PC-9 (cell line): ENCODE measurements at regions of chr6 and their contacts with region 1.

Region 1: DNA sequence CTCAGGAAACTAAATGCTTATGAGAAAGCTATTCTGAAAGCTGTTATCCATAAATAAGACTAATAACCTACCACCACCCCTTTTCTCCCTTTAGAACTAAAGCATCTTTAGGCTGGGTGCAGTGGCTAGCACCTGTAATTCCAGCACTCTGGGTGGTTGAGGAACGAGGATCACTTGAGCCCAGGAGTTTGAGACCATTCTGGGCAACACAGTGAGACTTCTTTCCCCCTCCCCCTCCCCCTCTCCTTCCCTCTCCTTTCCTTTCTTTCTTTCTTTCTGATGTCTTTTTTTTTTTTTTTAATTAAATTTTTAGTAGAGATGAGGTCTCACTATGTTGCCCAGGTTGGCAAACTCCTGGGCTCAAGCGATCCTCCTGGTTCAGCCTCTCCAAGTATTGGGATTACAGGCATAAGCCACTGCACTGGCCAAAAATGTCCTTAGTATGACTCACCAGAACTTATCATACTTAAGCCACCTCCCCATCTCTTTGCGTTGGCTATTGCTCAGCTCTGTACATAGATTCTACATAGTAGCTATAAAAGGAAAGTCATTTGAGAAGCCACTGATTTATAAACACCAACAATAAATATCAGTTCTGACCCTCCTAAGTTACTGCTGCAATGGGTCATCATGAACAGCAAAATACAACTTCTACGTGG is 54.8 kb upstream of the SPDEF start:
- DNase-seq: peak in 1 of 2 experiments; percentile 72
- H3K4me3 ChIP-seq: no peak overlapping the region
- H3K27ac ChIP-seq: peak overlapping the region; percentile 72; the same call in 1 of the 2 replicates
- H3K4me1 ChIP-seq: peaks cover 5% of the 10 kb centered on the region; the same call in 1 of the 2 replicates
- H3K27me3 ChIP-seq: no peaks in the 10 kb centered on the region
- CTCF ChIP-seq: no peak

Region 2: DNA sequence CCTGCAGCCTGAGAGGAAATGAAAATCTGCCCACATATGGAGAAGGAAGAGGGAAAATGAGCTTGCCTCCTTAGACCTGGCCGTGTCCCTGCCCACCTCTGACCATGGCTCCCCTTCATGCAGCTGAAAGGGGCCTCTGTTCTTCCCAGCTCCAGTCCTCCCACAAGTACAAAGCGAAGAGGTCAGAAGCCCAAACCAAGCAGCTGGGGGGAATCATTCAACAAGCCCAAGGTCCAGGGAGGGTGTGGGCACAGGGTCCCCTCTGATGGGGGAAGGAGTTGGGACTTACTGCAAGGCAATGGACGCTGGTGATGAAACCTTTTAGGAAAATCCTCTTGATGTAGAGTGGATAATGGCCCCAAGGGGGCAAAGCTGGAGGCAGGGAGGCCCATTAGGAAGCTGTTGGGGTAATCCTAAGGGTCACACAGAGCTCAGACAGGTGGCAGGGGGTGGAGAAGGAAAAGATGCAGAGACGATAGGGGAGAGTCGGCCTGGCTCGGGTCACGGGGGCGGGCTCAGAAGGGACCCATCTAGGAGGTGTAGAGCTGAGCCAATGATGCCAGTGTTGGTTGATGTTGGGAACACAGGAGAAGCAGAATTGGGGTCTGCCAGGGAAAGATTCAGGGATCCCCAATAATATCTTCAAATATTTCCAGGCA is 449.0 kb before region 1 on chr6:
- CTCF ChIA-PET with region 1: interaction called, 17 read pairs
- POLR2A ChIA-PET with region 1: no interaction called
- intact Hi-C with region 1: loop called (anchors 5 kb)
- DNase-seq: no peak
- H3K4me3 ChIP-seq: no peak overlapping the region
- H3K27ac ChIP-seq: no peak overlapping the region
- H3K4me1 ChIP-seq: no peaks in the 10 kb centered on the region; the same call in 1 of the 2 replicates
- H3K27me3 ChIP-seq: no peaks in the 10 kb centered on the region; the same call in 1 of the 2 replicates
- CTCF ChIP-seq: no peak

Region 3: GRCh38 chr6:34414999-34415858 is 195.7 kb before region 1 on chr6:
- CTCF ChIA-PET with region 1: no interaction called
- POLR2A ChIA-PET with region 1: no interaction called
- intact Hi-C with region 1: loop called (anchors 5 kb)
- DNase-seq: peak in 1 of 2 experiments; percentile 60
- H3K4me3 ChIP-seq: no peak overlapping the region
- H3K27ac ChIP-seq: no peak overlapping the region
- H3K4me1 ChIP-seq: no peaks in the 10 kb centered on the region
- H3K27me3 ChIP-seq: no peaks in the 10 kb centered on the region
- CTCF ChIP-seq: peak; percentile 54

Region 4: DNA sequence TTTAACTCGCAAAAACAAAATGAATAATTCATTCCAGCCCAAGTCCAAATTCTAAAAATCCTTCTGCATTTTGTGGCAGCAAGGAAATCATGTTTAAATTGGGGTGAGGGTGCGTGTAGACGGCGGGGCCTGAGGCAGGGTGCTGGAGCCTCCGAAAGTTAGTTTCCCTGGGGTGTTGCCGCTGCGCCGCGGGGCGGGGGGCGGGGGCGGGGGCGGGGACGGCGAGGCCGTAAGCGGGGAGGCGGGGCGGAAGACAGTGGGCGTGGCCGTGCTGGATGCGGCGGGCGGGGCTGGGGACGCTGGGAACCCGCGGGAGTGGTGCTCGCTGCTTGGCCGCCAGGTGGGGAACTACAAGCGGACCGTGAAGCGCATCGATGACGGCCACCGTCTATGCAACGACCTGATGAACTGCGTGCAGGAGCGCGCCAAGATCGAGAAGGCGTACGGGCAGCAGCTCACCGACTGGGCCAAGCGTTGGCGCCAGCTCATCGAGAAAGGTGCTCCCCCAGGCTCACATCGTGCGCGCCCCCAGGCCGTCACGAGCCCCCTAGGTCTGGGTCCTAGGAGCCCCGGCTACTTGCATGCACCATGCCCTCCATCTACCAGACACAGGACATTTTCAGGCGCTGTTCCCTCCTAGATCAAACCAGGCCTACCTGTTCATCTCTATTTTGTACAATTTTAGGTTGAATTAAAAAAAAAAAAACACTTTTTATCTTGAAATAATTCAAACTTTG is 83.8 kb before region 1 on chr6:
- CTCF ChIA-PET with region 1: interaction called, 6 read pairs
- POLR2A ChIA-PET with region 1: no interaction called
- intact Hi-C with region 1: loop called (anchors 1 kb)
- DNase-seq: peak; percentile 75 to 93
- H3K4me3 ChIP-seq: peak overlapping the region; percentile 36; the same call in 1 of the 2 replicates
- H3K27ac ChIP-seq: no peak overlapping the region
- H3K4me1 ChIP-seq: peaks cover 12% of the 10 kb centered on the region
- H3K27me3 ChIP-seq: no peaks in the 10 kb centered on the region
- CTCF ChIP-seq: peak; percentile 56

Region 5: DNA sequence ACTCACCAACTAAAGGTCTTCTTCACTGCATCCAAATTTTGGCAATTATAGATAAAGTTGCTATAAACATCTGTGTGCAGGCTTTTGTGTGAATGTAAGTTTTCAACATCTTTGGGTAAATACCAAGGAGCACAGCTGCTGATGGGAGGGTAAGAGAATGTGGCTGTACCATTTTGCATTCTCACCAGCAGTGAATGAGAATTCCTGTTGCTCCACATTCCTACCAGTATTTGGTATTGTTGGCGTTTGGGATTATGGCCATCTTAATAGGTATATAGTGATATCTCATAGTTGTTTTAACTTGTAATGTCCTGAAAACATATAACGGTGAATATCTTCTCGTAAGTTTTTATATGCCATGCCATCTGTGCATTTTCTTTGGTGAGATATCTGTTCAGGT is 16.3 kb after region 1 on chr6:
- CTCF ChIA-PET with region 1: no interaction called
- POLR2A ChIA-PET with region 1: no interaction called
- intact Hi-C with region 1: no loop called
- DNase-seq: no peak
- H3K4me3 ChIP-seq: no peak overlapping the region
- H3K27ac ChIP-seq: no peak overlapping the region
- H3K4me1 ChIP-seq: peaks cover 9% of the 10 kb centered on the region; the same call in 1 of the 2 replicates
- H3K27me3 ChIP-seq: no peaks in the 10 kb centered on the region
- CTCF ChIP-seq: no peak

Region 6: GRCh38 chr6:34757687-34758274 is 146.8 kb after region 1 on chr6:
- CTCF ChIA-PET with region 1: no interaction called
- POLR2A ChIA-PET with region 1: no interaction called
- intact Hi-C with region 1: loop called (anchors 1 kb)
- DNase-seq: no peak
- H3K4me3 ChIP-seq: peak overlapping the region; percentile 94
- H3K27ac ChIP-seq: peak overlapping the region; percentile 91; the same call in 1 of the 2 replicates
- H3K4me1 ChIP-seq: peaks cover 8% of the 10 kb centered on the region
- H3K27me3 ChIP-seq: no peaks in the 10 kb centered on the region
- CTCF ChIP-seq: no peak

Region 7: GRCh38 chr6:35181933-35182612 is 571.1 kb after region 1 on chr6:
- CTCF ChIA-PET with region 1: no interaction called
- POLR2A ChIA-PET with region 1: interaction called, 14 read pairs
- intact Hi-C with region 1: no loop called
- DNase-seq: peak; percentile 58 to 65
- H3K4me3 ChIP-seq: peak overlapping the region; percentile 42; the same call in 1 of the 2 replicates
- H3K27ac ChIP-seq: peak overlapping the region; percentile 82
- H3K4me1 ChIP-seq: peaks cover 68% of the 10 kb centered on the region
- H3K27me3 ChIP-seq: no peaks in the 10 kb centered on the region
- CTCF ChIP-seq: no peak